ENCODE measurements at regions of chr2 and their contacts with region 1.

Region 1: DNA sequence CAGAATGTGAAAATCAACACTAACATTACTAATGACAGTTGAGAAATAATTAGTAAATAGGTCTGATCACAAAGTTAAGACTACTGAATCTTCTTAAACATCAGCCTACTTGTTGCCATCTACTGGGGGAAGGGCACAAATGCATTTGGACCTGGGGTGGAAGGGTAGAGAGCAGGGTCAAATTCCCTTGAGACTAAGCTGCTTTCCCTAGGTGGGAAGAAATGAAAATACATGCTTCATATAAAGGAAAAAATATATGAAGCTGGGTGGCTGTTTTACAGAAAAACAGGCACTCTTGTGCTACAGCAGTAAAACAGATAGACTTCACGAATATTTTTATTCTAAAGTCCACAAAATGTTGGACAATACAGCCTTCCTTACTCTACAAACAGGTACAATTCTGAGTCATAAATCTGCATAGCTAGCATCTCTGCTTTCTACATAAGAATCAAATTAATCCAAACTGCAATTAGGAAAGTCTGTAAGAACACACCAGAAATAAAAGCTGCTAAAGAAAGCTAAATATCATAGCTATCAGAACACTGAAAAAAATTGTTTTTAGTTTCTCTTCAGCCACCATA is 10.9 kb downstream of the TRIP12 start:
- DNase-seq: no peak
- ATAC-seq: peak; percentile 41 to 77 (median 60)
- H3K4me3 ChIP-seq: no peak overlapping the region
- H3K27ac ChIP-seq: peak overlapping the region; percentile 39
- H3K4me1 ChIP-seq: peaks cover 78% of the 10 kb centered on the region
- H3K27me3 ChIP-seq: no peaks in the 10 kb centered on the region
- CTCF ChIP-seq: peak; percentile 30

Region 2: GRCh38 chr2:229875549-229875948 is 35.4 kb before region 1 on chr2:
- intact Hi-C with region 1: loop called (anchors 5 kb)
- DNase-seq: no peak
- ATAC-seq: no peak
- H3K4me3 ChIP-seq: no peak overlapping the region
- H3K27ac ChIP-seq: no peak overlapping the region
- H3K4me1 ChIP-seq: peaks cover 9% of the 10 kb centered on the region
- H3K27me3 ChIP-seq: no peaks in the 10 kb centered on the region
- CTCF ChIP-seq: no peak